ENCODE measurements at regions of chr3 and their contacts with region 1.

Region 1: DNA sequence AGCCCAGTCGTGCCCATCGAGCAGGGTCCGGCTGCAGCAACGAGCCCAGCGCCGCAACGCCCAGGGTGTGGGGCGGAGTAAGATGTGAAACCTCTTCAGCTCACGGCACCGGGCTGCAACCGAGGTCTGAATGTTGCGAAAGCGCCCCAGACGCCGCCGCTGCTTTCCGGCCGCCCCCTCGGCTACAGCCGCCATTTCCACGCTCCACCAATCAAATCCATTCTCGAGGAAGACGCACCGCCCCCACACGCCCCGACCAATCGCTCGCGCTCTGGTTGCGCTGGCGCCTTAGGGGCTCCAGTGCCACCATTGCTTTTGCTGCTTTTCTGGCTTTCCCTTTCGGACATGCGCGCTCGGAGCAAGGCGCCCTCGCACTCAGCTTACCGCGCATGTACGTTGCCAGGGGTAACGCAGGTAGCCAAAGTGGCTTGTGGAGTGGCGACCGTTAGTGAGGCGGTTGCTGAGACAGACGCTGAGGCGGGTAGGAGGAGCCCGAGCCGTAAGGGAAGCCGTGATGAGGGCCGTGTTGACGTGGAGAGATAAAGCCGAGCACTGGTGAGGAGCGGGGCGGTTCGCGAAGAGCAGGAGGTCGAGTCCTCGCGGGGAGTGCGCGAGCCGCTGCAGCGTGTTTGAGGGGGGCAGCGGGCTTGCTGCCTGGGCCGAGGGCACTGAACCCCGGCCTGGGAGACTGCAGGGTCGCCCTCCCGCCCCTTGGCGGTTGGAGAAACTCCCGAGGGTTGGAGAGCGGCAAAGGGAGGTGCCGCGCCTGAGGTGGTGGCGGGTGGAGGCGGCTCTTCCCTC is at the starts of genes IFT122 and MBD4:
- DNase-seq: peak; percentile 99
- ATAC-seq: peak; percentile 84
- H3K4me3 ChIP-seq: peak within 1 kb of the TSS; percentile 81 to 100 (median 99)
- H3K4me3 Mint-ChIP-seq: peak within 1 kb of the TSS; percentile 93
- H3K27ac ChIP-seq: peak within 1 kb of the TSS; percentile 78 to 91
- H3K27ac Mint-ChIP-seq: peak within 1 kb of the TSS; percentile 95
- H3K4me1 ChIP-seq: peaks cover 45 to 46% of the 10 kb centered on the region in 2 donors
- H3K4me1 Mint-ChIP-seq: peaks cover 52% of the 10 kb centered on the region
- H3K27me3 ChIP-seq: no peaks in the 10 kb centered on the region
- H3K27me3 Mint-ChIP-seq: no peaks in the 10 kb centered on the region
- CTCF ChIP-seq: no peak
- total RNA-seq, gene IFT122: 28.7 and 34.3 TPM in 2 replicates
- total RNA-seq, gene MBD4: 140 and 144 TPM in 2 replicates

Region 2: GRCh38 chr3:128845778-128846485 is 594.1 kb before region 1 on chr3:
- CTCF ChIA-PET with region 1: no interaction called
- POLR2A ChIA-PET with region 1: no interaction called
- intact Hi-C with region 1: no loop called
- DNase-seq: peak; percentile 82
- ATAC-seq: peak; percentile 86
- H3K4me3 ChIP-seq: peak overlapping the region in 4 of 5 experiments; percentile 45 to 70 (median 58)
- H3K4me3 Mint-ChIP-seq: peak overlapping the region; percentile 85
- H3K27ac ChIP-seq: peak overlapping the region in 1 of 2 donors; percentile 52
- H3K27ac Mint-ChIP-seq: peak overlapping the region; percentile 56
- H3K4me1 ChIP-seq: peaks cover 11 to 17% of the 10 kb centered on the region in 2 donors
- H3K4me1 Mint-ChIP-seq: peaks cover 11% of the 10 kb centered on the region
- H3K27me3 ChIP-seq: no peaks in the 10 kb centered on the region
- H3K27me3 Mint-ChIP-seq: no peaks in the 10 kb centered on the region
- CTCF ChIP-seq: peak; percentile 85

Region 3: GRCh38 chr3:129233538-129233937 is 206.5 kb before region 1 on chr3:
- CTCF ChIA-PET with region 1: no interaction called
- POLR2A ChIA-PET with region 1: no interaction called
- intact Hi-C with region 1: loop called (anchors 5 kb)
- DNase-seq: peak; percentile 95
- ATAC-seq: peak; percentile 94
- H3K4me3 ChIP-seq: no peak overlapping the region
- H3K4me3 Mint-ChIP-seq: peak overlapping the region; percentile 50
- H3K27ac ChIP-seq: peak overlapping the region; percentile 71 to 87
- H3K27ac Mint-ChIP-seq: peak overlapping the region; percentile 97
- H3K4me1 ChIP-seq: peaks cover 28 to 36% of the 10 kb centered on the region in 2 donors
- H3K4me1 Mint-ChIP-seq: peaks cover 47% of the 10 kb centered on the region
- H3K27me3 ChIP-seq: no peaks in the 10 kb centered on the region
- H3K27me3 Mint-ChIP-seq: no peaks in the 10 kb centered on the region
- CTCF ChIP-seq: no peak

Region 4: GRCh38 chr3:129263161-129264070 is 176.6 kb before region 1 on chr3:
- CTCF ChIA-PET with region 1: no interaction called
- POLR2A ChIA-PET with region 1: no interaction called
- intact Hi-C with region 1: no loop called
- DNase-seq: no peak
- ATAC-seq: no peak
- H3K4me3 ChIP-seq: no peak overlapping the region
- H3K4me3 Mint-ChIP-seq: no peak overlapping the region
- H3K27ac ChIP-seq: no peak overlapping the region
- H3K27ac Mint-ChIP-seq: no peak overlapping the region
- H3K4me1 ChIP-seq: no peaks in the 10 kb centered on the region
- H3K4me1 Mint-ChIP-seq: no peaks in the 10 kb centered on the region
- H3K27me3 ChIP-seq: no peaks in the 10 kb centered on the region
- H3K27me3 Mint-ChIP-seq: no peaks in the 10 kb centered on the region
- CTCF ChIP-seq: no peak

Region 5: DNA sequence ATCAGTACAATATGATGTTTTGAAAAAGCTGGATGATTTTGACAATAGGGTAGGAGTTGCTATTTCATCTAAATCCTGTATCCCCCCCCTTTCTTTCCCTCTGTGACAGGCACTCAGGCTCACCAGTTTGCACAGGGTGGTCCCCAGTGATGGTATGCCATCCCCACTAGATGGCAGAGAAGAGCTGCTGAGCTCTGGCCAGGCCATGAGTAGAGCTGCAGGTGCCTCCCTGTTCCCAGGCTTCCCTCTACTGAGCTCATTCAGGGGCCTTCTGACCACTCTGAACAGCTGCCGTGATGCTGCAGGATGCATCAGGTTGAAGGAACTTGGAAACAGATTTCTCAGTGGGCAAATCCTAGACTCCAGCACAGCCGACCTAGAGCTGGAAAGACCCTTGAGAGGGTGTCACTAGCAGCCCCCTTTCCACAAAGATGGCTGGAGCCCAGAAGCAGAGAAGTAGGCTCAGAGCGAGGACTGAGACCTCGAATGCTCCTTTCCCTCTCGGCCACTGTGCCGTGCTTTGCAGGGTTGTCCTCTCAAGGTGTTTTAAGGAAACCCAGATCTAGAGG is 56.6 kb before region 1 on chr3:
- CTCF ChIA-PET with region 1: interaction called, 14 read pairs
- POLR2A ChIA-PET with region 1: interaction called, 6 read pairs
- intact Hi-C with region 1: loop called (anchors 1 kb)
- DNase-seq: peak; percentile 61
- ATAC-seq: peak; percentile 93
- H3K4me3 ChIP-seq: no peak overlapping the region
- H3K4me3 Mint-ChIP-seq: no peak overlapping the region
- H3K27ac ChIP-seq: no peak overlapping the region
- H3K27ac Mint-ChIP-seq: no peak overlapping the region
- H3K4me1 ChIP-seq: no peaks in the 10 kb centered on the region
- H3K4me1 Mint-ChIP-seq: no peaks in the 10 kb centered on the region
- H3K27me3 ChIP-seq: no peaks in the 10 kb centered on the region
- H3K27me3 Mint-ChIP-seq: no peaks in the 10 kb centered on the region
- CTCF ChIP-seq: peak; percentile 78

Region 6: GRCh38 chr3:129409541-129409940 is 30.5 kb before region 1 on chr3:
- CTCF ChIA-PET with region 1: no interaction called
- POLR2A ChIA-PET with region 1: no interaction called
- intact Hi-C with region 1: no loop called
- DNase-seq: no peak
- ATAC-seq: no peak
- H3K4me3 ChIP-seq: no peak overlapping the region
- H3K4me3 Mint-ChIP-seq: no peak overlapping the region
- H3K27ac ChIP-seq: no peak overlapping the region
- H3K27ac Mint-ChIP-seq: peak overlapping the region; percentile 26
- H3K4me1 ChIP-seq: peaks cover 0 to 9% of the 10 kb centered on the region in 2 donors
- H3K4me1 Mint-ChIP-seq: peaks cover 14% of the 10 kb centered on the region
- H3K27me3 ChIP-seq: no peaks in the 10 kb centered on the region
- H3K27me3 Mint-ChIP-seq: no peaks in the 10 kb centered on the region
- CTCF ChIP-seq: no peak

Region 7: DNA sequence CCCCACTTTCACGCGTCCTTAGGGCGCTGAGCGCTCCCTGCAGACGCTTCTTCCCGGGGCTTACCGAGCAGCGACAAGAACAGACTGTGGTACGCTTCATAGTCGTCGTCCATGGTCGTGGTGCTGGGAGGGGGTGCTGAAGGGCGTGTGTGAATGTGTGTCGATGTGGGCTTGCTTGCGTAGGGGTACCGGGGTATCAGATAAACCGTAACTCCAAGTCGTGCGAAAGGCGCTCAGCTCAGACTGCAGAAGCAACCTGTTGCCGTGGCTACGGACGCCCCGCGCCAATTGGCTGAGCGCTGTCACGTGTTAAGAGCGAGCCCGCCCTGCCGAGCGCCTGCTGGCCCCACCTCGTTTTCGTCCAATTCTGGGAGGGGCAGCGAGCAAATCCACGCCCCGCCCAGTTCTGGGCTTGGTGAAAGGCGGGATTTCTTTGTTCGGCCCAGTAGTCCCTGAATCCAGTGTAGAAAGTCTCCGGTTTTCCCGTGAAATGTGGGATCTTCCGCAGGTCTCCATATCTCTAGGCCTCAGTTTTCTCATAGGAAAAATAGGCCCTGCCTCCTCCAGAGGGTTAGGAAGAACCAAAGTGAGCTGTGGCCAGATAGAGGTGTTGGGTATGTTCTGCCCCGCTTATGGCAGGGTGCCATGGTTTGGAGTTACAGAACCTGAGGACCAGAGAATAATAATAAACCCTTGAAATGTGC is 11.5 kb before region 1 on chr3 and contains the start of gene EFCAB12:
- CTCF ChIA-PET with region 1: interaction called, 9 read pairs
- POLR2A ChIA-PET with region 1: interaction called, 17 read pairs
- intact Hi-C with region 1: loop called (anchors 1 kb)
- DNase-seq: peak; percentile 91
- ATAC-seq: peak; percentile 89
- H3K4me3 ChIP-seq: peak within 1 kb of the TSS; percentile 22 to 68 (median 53)
- H3K4me3 Mint-ChIP-seq: peak within 1 kb of the TSS; percentile 90
- H3K27ac ChIP-seq: peak within 1 kb of the TSS; percentile 2 to 63
- H3K27ac Mint-ChIP-seq: peak within 1 kb of the TSS; percentile 88
- H3K4me1 ChIP-seq: peaks cover 45 to 62% of the 10 kb centered on the region in 2 donors
- H3K4me1 Mint-ChIP-seq: peaks cover 68% of the 10 kb centered on the region
- H3K27me3 ChIP-seq: no peaks in the 10 kb centered on the region
- H3K27me3 Mint-ChIP-seq: no peaks in the 10 kb centered on the region
- CTCF ChIP-seq: no peak
- total RNA-seq, gene EFCAB12: 6.2 and 6.5 TPM in 2 replicates

Region 8: DNA sequence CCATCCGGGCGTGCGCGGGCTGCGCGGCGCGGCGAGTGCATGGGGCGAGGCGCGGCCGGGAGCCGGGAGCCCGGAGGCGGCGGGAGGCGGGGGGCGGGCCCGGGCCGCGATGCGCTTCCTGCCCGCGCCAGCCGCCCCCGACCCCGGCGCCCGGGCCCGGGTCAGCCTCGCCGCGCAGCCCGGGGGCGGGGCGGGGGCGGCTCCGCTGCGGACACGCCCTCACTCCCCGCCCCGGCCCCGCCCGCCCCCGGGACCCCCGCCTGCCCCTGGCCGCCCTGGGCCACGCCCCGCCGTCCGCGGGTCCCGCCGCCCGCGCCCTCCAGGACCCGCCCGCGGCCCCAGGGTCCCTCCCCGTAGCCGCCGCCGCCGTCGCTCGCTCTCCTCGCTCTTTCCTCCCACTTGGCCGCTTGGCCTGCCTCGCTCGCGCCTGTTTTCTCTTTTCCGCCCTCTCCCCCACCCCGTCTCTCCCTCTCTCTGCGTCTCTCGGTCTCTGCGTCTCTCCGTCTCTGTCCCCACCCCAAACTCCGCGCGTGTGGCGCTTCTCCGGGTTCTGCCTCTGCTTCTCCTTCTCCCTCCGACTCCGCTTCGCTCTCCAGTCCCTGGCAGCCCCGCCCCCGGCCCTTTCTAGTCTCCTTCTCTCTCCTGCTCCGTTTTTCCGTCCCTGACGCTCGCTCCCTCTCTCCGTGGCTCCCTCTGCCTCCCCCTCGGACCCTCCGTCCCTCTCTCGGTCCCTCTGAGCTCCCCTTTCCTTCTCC is 166.8 kb after region 1 on chr3 and contains the start of gene PLXND1:
- CTCF ChIA-PET with region 1: no interaction called
- POLR2A ChIA-PET with region 1: interaction called, 8 read pairs
- intact Hi-C with region 1: loop called (anchors 5 kb)
- DNase-seq: peak; percentile 57
- ATAC-seq: peak; percentile 78
- H3K4me3 ChIP-seq: peak within 1 kb of the TSS in 4 of 5 experiments; percentile 48 to 55 (median 53)
- H3K4me3 Mint-ChIP-seq: peak within 1 kb of the TSS; percentile 95
- H3K27ac ChIP-seq: no peak within 1 kb of the TSS
- H3K27ac Mint-ChIP-seq: peak within 1 kb of the TSS; percentile 89
- H3K4me1 ChIP-seq: peaks cover 16 to 19% of the 10 kb centered on the region in 2 donors
- H3K4me1 Mint-ChIP-seq: peaks cover 18% of the 10 kb centered on the region
- H3K27me3 ChIP-seq: peaks cover 0 to 37% (median 14%) of the 10 kb centered on the region in 4 experiments
- H3K27me3 Mint-ChIP-seq: peaks cover 20% of the 10 kb centered on the region
- CTCF ChIP-seq: no peak
- total RNA-seq, gene PLXND1: 74.4 and 89.8 TPM in 2 replicates

Region 9: DNA sequence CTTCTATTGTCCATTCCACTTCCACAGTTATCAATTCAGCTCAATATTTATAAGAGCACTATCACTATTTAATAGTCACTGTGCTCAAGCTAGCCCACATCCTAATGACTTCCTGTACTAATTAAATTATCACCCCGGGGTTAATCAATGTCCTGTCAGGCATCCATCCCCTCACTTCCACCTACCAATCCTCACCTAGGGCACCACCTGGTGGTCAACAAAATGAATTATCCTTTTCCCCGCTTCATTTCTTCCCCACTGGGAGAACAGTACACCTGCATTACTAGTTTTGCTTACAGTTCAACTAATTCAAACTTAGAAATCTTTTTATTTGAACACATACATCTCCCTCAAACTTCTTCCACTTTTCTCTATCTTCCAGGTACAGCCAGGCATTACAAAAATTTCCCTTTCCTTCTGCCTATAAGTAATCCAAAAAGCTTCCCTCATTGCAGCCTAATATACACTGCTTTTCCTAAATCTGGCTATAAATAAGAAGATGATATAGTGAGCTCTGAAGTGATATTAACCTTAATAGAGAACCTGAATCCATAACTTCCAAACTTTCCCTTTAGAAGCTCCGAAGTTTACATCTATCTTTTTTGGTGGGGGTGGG is 385.0 kb after region 1 on chr3:
- CTCF ChIA-PET with region 1: interaction called, 3 read pairs
- POLR2A ChIA-PET with region 1: no interaction called
- intact Hi-C with region 1: loop called (anchors 5 kb)
- DNase-seq: peak; percentile 74
- ATAC-seq: peak; percentile 50
- H3K4me3 ChIP-seq: no peak overlapping the region
- H3K4me3 Mint-ChIP-seq: no peak overlapping the region
- H3K27ac ChIP-seq: no peak overlapping the region
- H3K27ac Mint-ChIP-seq: no peak overlapping the region
- H3K4me1 ChIP-seq: peaks cover 11 to 12% of the 10 kb centered on the region in 2 donors
- H3K4me1 Mint-ChIP-seq: peaks cover 41% of the 10 kb centered on the region
- H3K27me3 ChIP-seq: no peaks in the 10 kb centered on the region
- H3K27me3 Mint-ChIP-seq: no peaks in the 10 kb centered on the region
- CTCF ChIP-seq: peak; percentile 80